ENCODE measurements at regions of chr11 and their contacts with region 1.

Region 1: DNA sequence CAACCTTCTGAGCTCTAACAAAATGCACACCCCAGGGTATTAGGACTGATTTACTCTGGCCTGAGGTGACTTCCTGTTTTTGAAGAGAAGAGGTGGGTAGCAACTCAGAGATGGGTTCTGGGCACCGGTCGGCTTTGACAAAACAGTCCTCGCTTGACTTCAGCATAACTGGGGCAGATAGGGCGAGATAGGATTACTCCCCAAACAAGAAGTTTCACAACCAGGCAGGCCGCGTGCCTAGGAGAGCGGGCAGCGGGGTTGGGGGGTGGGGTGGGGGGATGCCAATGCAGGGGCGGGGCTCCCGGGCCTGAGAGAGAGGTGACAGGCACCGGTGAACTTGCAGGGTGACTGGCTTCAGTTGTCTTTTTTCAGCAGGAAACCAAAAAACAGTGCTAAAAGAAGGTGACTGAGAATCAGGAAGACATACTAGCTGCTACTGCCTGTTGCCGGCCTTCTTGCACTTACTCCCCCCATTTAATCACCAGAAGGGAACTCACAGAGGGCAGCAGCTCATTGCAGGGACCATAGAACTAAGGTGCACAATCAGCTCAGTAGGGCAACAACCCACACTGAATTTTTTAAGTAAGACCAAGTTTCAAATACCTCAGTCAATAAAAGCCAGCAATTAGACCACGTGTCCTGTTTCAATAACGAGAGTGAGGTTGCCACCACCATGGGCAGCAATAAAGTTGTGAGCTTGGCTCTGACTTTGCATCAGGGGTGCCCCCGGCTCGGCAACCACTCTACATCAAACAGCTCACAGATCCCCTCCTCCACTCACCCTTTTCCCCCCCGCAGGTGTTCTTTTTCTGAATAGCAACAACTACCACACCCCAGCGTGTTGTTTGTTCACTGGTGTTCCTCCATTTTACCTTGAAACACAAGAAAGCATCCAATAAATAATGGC is 37.2 kb upstream of the ETS1 start:
- DNase-seq: no peak

Region 2: DNA sequence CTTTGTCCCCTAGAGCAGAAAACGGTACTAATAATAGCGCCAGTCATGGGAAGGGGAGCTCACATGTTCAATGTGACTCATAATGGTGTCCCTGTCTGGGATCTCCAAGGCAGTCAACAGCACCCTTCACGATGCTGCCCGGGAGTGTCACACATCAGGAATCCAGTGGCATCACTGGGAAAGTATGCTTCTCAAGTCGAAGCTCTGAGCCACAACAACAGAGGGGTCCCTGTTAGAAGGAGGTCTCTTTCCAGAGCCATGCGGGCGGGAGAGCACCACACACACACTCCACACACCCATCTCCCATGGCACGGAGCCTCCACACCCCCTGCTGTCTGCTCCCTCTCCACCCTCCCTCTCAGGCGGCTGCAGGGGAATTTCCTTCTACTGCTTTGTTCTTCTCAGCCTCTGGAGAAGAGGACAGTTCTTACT is 156.9 kb before region 1 on chr11:
- intact Hi-C with region 1: loop called (anchors 5 kb)
- DNase-seq: no peak

Region 3: GRCh38 chr11:128552783-128553661 is 71.5 kb before region 1 on chr11:
- intact Hi-C with region 1: loop called (anchors 5 kb)
- DNase-seq: no peak

Region 4: GRCh38 chr11:128582496-128583366 is 41.8 kb before region 1 on chr11:
- intact Hi-C with region 1: no loop called
- DNase-seq: peak; percentile 81